ENCODE measurements at regions of chr5 and their contacts with region 1.

Region 1: GRCh38 chr5:15821506-15821905 is 321.5 kb downstream of the FBXL7 start:
- DNase-seq: peak; percentile 63
- H3K4me3 ChIP-seq: no peak overlapping the region
- H3K27ac ChIP-seq: no peak overlapping the region
- H3K4me1 ChIP-seq: peaks cover 12% of the 10 kb centered on the region
- H3K27me3 ChIP-seq: no peaks in the 10 kb centered on the region
- CTCF ChIP-seq: no peak
- POLR2A ChIP-seq: no peak

Region 2: GRCh38 chr5:15285901-15286583 is 535.5 kb before region 1 on chr5:
- CTCF ChIA-PET with region 1: no interaction called
- POLR2A ChIA-PET with region 1: no interaction called
- dilution Hi-C with region 1: no loop called
- intact Hi-C with region 1: loop called (anchors 5 kb)
- DNase-seq: peak; percentile 24
- H3K4me3 ChIP-seq: no peak overlapping the region
- H3K27ac ChIP-seq: no peak overlapping the region
- H3K4me1 ChIP-seq: peaks cover 2% of the 10 kb centered on the region
- H3K27me3 ChIP-seq: no peaks in the 10 kb centered on the region
- CTCF ChIP-seq: no peak
- POLR2A ChIP-seq: no peak

Region 3: GRCh38 chr5:15383469-15383868 is 438.0 kb before region 1 on chr5:
- CTCF ChIA-PET with region 1: interaction called, 5 read pairs
- POLR2A ChIA-PET with region 1: no interaction called
- dilution Hi-C with region 1: no loop called
- intact Hi-C with region 1: loop called (anchors 1 kb)
- DNase-seq: peak; percentile 18
- H3K4me3 ChIP-seq: no peak overlapping the region
- H3K27ac ChIP-seq: no peak overlapping the region
- H3K4me1 ChIP-seq: no peaks in the 10 kb centered on the region
- H3K27me3 ChIP-seq: peaks cover 0 to 3% of the 10 kb centered on the region in 2 experiments
- CTCF ChIP-seq: peak; percentile 16 to 26
- POLR2A ChIP-seq: no peak

Region 4: DNA sequence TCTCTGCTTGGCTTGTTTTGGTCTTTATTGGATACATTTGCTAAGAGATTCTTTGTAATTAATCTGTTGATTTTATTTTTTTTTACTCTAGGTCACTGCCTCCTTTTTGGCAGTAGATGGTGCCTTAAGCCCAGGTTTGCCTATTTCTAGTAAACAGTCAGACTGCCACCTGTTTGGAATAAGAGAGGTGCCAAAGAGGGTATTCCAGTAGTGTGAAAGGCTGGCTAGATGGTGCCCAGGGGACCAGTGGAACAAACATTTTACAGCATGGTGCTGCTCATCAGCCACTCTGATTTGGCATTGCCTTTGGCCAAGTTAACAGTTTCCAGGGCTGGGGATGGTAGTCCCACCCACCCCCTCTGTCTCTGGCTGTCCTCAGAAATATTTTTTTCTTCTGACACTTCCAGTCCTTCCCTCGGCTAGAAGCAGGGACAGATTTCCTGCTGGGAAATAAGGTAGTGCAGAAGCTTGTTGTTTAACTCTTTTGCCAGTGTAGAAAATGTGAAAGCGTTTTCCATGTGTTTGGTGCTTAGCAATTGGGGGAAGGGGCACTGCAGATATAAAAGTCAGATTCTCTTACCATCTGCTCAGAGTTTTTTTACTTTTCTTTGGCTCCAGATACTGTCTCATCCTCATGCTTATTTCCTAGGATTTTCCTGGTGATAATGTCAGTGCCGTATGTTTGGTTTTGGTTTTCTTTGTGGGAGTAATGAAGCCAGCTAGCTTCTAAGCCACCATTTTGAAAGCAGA is 358.1 kb before region 1 on chr5:
- CTCF ChIA-PET with region 1: interaction called, 8 read pairs
- POLR2A ChIA-PET with region 1: interaction called, 6 read pairs
- dilution Hi-C with region 1: no loop called
- intact Hi-C with region 1: loop called (anchors 1 kb)
- DNase-seq: peak; percentile 52
- H3K4me3 ChIP-seq: no peak overlapping the region
- H3K27ac ChIP-seq: no peak overlapping the region
- H3K4me1 ChIP-seq: no peaks in the 10 kb centered on the region
- H3K27me3 ChIP-seq: peaks cover 17 to 36% of the 10 kb centered on the region in 2 experiments
- CTCF ChIP-seq: peak; percentile 30 to 45
- POLR2A ChIP-seq: no peak

Region 5: DNA sequence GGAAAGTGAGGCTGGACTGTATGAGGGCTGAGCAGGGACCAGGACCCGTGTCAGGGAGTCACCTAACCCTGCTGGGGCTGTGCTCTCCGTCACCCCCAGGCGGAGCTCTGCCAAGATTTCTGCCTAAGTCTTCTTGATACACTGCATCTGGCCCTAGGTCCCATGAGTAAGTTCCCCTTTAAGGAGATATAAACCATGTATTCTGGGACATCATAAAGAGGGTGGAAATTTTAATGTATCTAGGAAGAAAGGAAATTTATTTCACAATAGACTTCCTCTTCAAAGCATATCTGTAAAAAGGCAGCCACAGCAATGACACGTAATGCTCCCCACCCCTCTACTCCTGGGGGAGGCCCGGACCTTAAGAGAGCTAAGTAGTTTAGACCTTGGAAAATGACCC is 138.2 kb before region 1 on chr5:
- CTCF ChIA-PET with region 1: interaction called, 19 read pairs
- POLR2A ChIA-PET with region 1: no interaction called
- dilution Hi-C with region 1: no loop called
- intact Hi-C with region 1: loop called (anchors 1 kb)
- DNase-seq: peak; percentile 76
- H3K4me3 ChIP-seq: no peak overlapping the region
- H3K27ac ChIP-seq: no peak overlapping the region
- H3K4me1 ChIP-seq: peaks cover 4% of the 10 kb centered on the region
- H3K27me3 ChIP-seq: no peaks in the 10 kb centered on the region
- CTCF ChIP-seq: peak; percentile 44 to 58
- POLR2A ChIP-seq: no peak

Region 6: GRCh38 chr5:15807871-15808270 is 13.6 kb before region 1 on chr5:
- CTCF ChIA-PET with region 1: interaction called, 79 read pairs
- POLR2A ChIA-PET with region 1: interaction called, 3 read pairs
- dilution Hi-C with region 1: no loop called
- intact Hi-C with region 1: loop called (anchors 1 kb)
- DNase-seq: peak; percentile 90
- H3K4me3 ChIP-seq: no peak overlapping the region
- H3K27ac ChIP-seq: peak overlapping the region; percentile 35
- H3K4me1 ChIP-seq: peaks cover 15% of the 10 kb centered on the region
- H3K27me3 ChIP-seq: no peaks in the 10 kb centered on the region
- CTCF ChIP-seq: peak; percentile 33 to 47
- POLR2A ChIP-seq: no peak

Region 7: DNA sequence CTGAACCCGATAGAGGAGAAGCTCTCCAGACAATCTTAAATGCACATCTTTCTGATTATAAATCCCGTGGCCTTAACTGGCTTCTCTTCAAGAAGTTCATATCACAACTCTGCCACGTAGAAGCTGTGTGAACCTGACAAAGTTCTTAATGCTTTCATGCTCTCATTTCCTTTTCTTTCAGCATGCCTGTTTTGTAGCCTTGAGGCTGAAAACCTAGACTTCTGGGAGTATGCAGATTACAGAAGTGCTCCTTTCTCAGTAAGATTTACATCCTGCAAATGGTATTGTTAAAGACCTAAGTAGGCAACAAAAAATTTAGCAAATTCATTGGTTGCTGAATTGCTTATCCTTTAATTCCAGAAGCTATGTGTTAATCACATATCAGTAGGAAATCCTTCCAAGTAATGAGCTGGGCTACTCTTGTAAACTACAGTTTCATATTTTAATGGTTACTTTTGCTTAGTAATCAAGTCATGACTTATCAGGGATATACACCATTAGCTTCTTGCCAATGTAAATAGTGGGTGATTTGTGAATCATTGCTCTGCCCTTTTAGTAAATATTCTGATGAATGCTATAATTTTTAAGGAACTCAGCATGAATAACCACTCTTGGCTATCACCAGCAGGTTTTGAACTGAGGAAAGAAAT is 13.2 kb after region 1 on chr5:
- CTCF ChIA-PET with region 1: interaction called, 66 read pairs
- POLR2A ChIA-PET with region 1: no interaction called
- dilution Hi-C with region 1: no loop called
- intact Hi-C with region 1: no loop called
- DNase-seq: peak; percentile 94
- H3K4me3 ChIP-seq: peak overlapping the region in 1 of 3 experiments; percentile 27
- H3K27ac ChIP-seq: peak overlapping the region; percentile 79
- H3K4me1 ChIP-seq: peaks cover 24% of the 10 kb centered on the region
- H3K27me3 ChIP-seq: no peaks in the 10 kb centered on the region
- CTCF ChIP-seq: no peak
- POLR2A ChIP-seq: no peak

Region 8: GRCh38 chr5:16291894-16292293 is 470.4 kb after region 1 on chr5:
- CTCF ChIA-PET with region 1: no interaction called
- POLR2A ChIA-PET with region 1: no interaction called
- dilution Hi-C with region 1: no loop called
- intact Hi-C with region 1: no loop called
- DNase-seq: no peak
- H3K4me3 ChIP-seq: no peak overlapping the region
- H3K27ac ChIP-seq: no peak overlapping the region
- H3K4me1 ChIP-seq: no peaks in the 10 kb centered on the region
- H3K27me3 ChIP-seq: no peaks in the 10 kb centered on the region
- CTCF ChIP-seq: no peak
- POLR2A ChIP-seq: no peak